ENCODE measurements at regions of chr16 and their contacts with region 1.

Region 1: GRCh38 chr16:84062734-84063640 is 20.4 kb upstream of the SLC38A8 start:
- DNase-seq: peak; percentile 88

Region 2: GRCh38 chr16:83952940-83953795 is 109.8 kb before region 1 on chr16 and contains the start of gene OSGIN1:
- CTCF ChIA-PET with region 1: interaction called, 34 read pairs
- POLR2A ChIA-PET with region 1: no interaction called
- DNase-seq: peak; percentile 69

Region 3: GRCh38 chr16:83964684-83965443 is 98.1 kb before region 1 on chr16:
- CTCF ChIA-PET with region 1: interaction called, 12 read pairs
- POLR2A ChIA-PET with region 1: no interaction called
- DNase-seq: no peak

Region 4: GRCh38 chr16:84048270-84048669 is 14.7 kb before region 1 on chr16:
- CTCF ChIA-PET with region 1: no interaction called
- POLR2A ChIA-PET with region 1: no interaction called
- DNase-seq: no peak

Measured in HEK293T (cell line).